ENCODE measurements at regions of chr4 and their contacts with region 1.

Region 1: DNA sequence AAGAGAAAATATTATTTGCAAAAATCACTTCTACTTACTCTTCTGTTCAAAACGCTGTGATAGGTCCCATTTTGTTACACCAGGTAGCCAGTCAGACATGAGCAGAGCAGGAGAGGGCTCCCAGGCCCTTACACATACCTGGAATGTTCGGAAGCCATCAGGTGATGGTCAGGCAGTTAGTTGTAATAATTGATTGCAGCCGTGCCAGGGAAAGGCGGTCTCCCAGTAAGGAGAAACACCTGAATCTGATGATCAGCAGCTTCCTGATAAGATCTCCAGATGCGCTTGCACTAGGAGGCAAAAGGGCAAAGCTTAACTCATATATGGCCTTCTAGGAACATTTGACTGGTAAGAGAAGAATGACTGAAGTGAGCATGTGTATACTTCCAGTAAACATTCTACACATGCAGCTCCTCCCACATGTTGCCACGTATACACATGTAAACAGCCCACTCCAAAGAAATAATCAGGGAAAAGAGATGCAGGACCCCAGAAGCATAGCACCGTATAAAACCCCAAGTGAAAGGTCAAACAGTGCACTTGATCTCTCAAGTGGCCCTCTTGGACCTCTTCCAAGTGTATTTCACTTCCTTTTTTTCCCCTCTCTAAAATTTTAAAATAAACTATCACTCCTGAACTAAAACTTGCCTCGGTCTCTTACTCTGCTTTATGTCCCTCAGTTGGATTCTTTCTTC is 1338.0 kb downstream of the FSTL5 start:
- DNase-seq: peak; percentile 51
- H3K4me3 Mint-ChIP-seq: peak overlapping the region; percentile 84
- H3K27ac Mint-ChIP-seq: peak overlapping the region; percentile 100
- H3K4me1 Mint-ChIP-seq: peaks cover 27% of the 10 kb centered on the region
- H3K27me3 Mint-ChIP-seq: no peaks in the 10 kb centered on the region
- CTCF ChIP-seq: no peak

Region 2: DNA sequence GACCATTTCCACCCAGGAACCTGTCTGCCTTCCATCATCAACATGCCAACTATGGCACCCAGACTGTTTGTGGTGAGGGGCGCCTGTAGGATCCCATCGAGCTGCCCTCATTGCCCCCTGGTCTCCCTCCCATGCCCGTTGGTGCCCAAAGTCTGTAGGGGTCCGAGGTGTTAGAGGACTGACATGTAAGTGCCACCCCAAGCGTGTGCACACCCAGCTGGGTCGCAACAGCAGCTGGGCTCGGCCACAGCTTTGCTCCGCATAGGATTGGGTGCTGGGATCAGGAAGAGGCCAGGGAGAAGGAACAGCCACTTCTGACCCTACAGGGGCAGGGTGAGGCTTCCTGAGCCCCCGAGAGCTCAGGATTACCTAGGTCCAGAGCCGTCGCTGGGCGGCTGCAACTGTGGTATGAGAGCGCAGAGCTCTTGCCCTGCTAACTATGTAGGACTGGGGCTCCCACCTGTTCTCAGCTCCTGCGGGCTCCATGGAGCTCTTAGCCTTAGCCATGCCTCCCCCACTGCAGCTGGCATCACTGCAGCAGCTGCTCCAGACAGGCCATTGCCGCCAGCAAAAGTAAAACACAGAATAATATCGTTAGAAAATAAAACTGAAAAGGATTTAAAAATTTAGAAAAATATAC is 177.7 kb after region 1 on chr4:
- CTCF ChIA-PET with region 1: no interaction called
- intact Hi-C with region 1: loop called (anchors 10 kb)
- DNase-seq: no peak
- H3K4me3 Mint-ChIP-seq: no peak overlapping the region
- H3K27ac Mint-ChIP-seq: no peak overlapping the region
- H3K4me1 Mint-ChIP-seq: peaks cover 7% of the 10 kb centered on the region
- H3K27me3 Mint-ChIP-seq: no peaks in the 10 kb centered on the region
- CTCF ChIP-seq: no peak

Region 3: GRCh38 chr4:161222889-161223288 is 397.1 kb after region 1 on chr4:
- CTCF ChIA-PET with region 1: no interaction called
- intact Hi-C with region 1: no loop called
- DNase-seq: no peak
- H3K4me3 Mint-ChIP-seq: no peak overlapping the region
- H3K27ac Mint-ChIP-seq: no peak overlapping the region
- H3K4me1 Mint-ChIP-seq: peaks cover 7% of the 10 kb centered on the region
- H3K27me3 Mint-ChIP-seq: no peaks in the 10 kb centered on the region
- CTCF ChIP-seq: no peak

Region 4: GRCh38 chr4:161457311-161457710 is 631.5 kb after region 1 on chr4:
- CTCF ChIA-PET with region 1: no interaction called
- intact Hi-C with region 1: no loop called
- DNase-seq: no peak
- H3K4me3 Mint-ChIP-seq: no peak overlapping the region
- H3K27ac Mint-ChIP-seq: no peak overlapping the region
- H3K4me1 Mint-ChIP-seq: no peaks in the 10 kb centered on the region
- H3K27me3 Mint-ChIP-seq: no peaks in the 10 kb centered on the region
- CTCF ChIP-seq: no peak